Caco-2 (cell line): ENCODE measurements at regions of chr7 and their contacts with region 1.

Region 1: GRCh38 chr7:73851410-73852234 is 9.3 kb upstream of the METTL27 start:
- DNase-seq: no peak
- H3K4me3 ChIP-seq: no peak overlapping the region
- H3K4me3 Mint-ChIP-seq: peak overlapping the region; percentile 8
- H3K27ac Mint-ChIP-seq: peak overlapping the region; percentile 87
- H3K4me1 ChIP-seq: peaks cover 28% of the 10 kb centered on the region
- H3K4me1 Mint-ChIP-seq: peaks cover 38% of the 10 kb centered on the region
- H3K27me3 ChIP-seq: no peaks in the 10 kb centered on the region
- H3K27me3 Mint-ChIP-seq: no peaks in the 10 kb centered on the region
- CTCF ChIP-seq: no peak

Region 2: GRCh38 chr7:73738612-73739374 is 112.8 kb before region 1 on chr7 and contains the start of gene ABHD11:
- CTCF ChIA-PET with region 1: interaction called, 5 read pairs
- POLR2A ChIA-PET with region 1: interaction called, 3 read pairs
- intact Hi-C with region 1: loop called (anchors 2 kb)
- DNase-seq: peak; percentile 99
- H3K4me3 ChIP-seq: peak within 1 kb of the TSS; percentile 63
- H3K4me3 Mint-ChIP-seq: peak within 1 kb of the TSS; percentile 98
- H3K27ac Mint-ChIP-seq: peak within 1 kb of the TSS; percentile 100
- H3K4me1 ChIP-seq: peaks cover 46% of the 10 kb centered on the region
- H3K4me1 Mint-ChIP-seq: peaks cover 25% of the 10 kb centered on the region
- H3K27me3 ChIP-seq: no peaks in the 10 kb centered on the region
- H3K27me3 Mint-ChIP-seq: no peaks in the 10 kb centered on the region
- CTCF ChIP-seq: no peak
- total RNA-seq, gene ABHD11: 38.9 and 47.2 TPM in 2 replicates

Region 3: DNA sequence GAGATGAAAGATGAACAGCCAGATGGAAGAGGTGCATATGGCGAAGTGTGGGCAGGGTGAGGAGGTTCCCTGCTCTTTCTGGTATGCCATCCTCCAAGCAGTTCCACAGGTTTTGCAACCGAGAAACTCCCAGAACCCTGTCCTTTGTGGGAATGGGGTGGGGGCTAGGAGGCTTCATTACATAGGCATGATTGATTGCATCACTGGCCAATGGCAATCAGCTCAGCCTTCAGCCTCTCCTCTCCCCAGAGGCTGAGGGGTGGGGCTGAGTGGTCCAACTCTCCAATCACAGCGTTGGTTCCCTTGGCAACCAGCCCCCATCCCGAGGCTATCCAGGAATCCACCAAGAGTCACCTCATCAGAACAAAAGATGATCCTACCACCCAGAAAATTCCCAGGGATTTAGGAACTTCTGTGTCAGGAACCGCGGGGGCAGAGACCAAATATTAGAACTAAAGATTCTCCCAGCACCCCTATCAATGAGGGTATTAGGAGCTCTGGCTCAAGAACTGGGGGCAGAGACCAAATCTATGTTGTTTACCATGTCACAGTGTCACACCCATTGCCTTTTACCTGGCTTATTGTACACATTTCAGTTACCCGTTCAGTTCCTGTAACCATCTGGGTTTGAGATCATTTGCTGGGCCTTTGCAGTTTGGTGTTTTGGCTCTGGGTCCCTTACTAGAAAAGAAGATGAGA is 58.9 kb before region 1 on chr7:
- CTCF ChIA-PET with region 1: no interaction called
- POLR2A ChIA-PET with region 1: no interaction called
- intact Hi-C with region 1: loop called (anchors 10 kb)
- DNase-seq: peak; percentile 91 to 98
- H3K4me3 ChIP-seq: no peak overlapping the region
- H3K4me3 Mint-ChIP-seq: no peak overlapping the region
- H3K27ac Mint-ChIP-seq: peak overlapping the region; percentile 10
- H3K4me1 ChIP-seq: peaks cover 40% of the 10 kb centered on the region
- H3K4me1 Mint-ChIP-seq: peaks cover 37% of the 10 kb centered on the region
- H3K27me3 ChIP-seq: no peaks in the 10 kb centered on the region
- H3K27me3 Mint-ChIP-seq: no peaks in the 10 kb centered on the region
- CTCF ChIP-seq: no peak

Region 4: DNA sequence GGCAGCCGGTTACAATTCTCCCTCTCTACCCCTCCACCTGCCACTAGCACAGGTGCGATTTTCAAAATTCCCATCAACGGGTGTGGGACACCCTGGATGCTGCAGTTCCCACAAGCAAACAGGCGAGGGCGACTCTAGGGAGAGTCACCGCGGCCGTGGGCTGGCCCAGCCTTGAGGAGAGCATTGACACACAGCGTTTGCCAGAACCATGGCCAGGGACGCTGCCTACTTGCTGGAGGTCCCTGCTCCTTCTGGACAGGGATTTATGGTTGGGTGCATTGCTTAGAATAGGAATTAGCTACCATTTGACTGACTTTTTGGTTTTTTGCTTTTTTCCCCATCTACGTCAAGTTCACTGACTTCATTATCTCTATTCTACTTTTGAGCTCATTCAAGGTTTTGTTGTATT is 39.9 kb before region 1 on chr7:
- CTCF ChIA-PET with region 1: interaction called, 7 read pairs
- POLR2A ChIA-PET with region 1: no interaction called
- intact Hi-C with region 1: loop called (anchors 1 kb)
- DNase-seq: peak; percentile 72 to 81
- H3K4me3 ChIP-seq: no peak overlapping the region
- H3K4me3 Mint-ChIP-seq: no peak overlapping the region
- H3K27ac Mint-ChIP-seq: no peak overlapping the region
- H3K4me1 ChIP-seq: peaks cover 5% of the 10 kb centered on the region; the same call in 1 of the 2 replicates
- H3K4me1 Mint-ChIP-seq: peaks cover 7% of the 10 kb centered on the region
- H3K27me3 ChIP-seq: no peaks in the 10 kb centered on the region
- H3K27me3 Mint-ChIP-seq: no peaks in the 10 kb centered on the region
- CTCF ChIP-seq: peak; percentile 67 to 72